PC-9 (cell line): ENCODE measurements at regions of chr19 and their contacts with region 1.

Region 1: GRCh38 chr19:55005684-55006488 is 32.2 kb downstream of the GP6 start:
- DNase-seq: peak; percentile 73 to 87
- H3K4me3 ChIP-seq: peak overlapping the region; percentile 71
- H3K27ac ChIP-seq: peak overlapping the region; percentile 58
- H3K4me1 ChIP-seq: no peaks in the 10 kb centered on the region; the same call in 1 of the 2 replicates
- H3K27me3 ChIP-seq: peaks cover 25% of the 10 kb centered on the region
- CTCF ChIP-seq: no peak

Region 2: GRCh38 chr19:54257116-54257480 is 748.8 kb before region 1 on chr19 and contains the start of gene LILRB5:
- CTCF ChIA-PET with region 1: interaction called, 25 read pairs
- POLR2A ChIA-PET with region 1: no interaction called
- intact Hi-C with region 1: no loop called
- DNase-seq: no peak
- H3K4me3 ChIP-seq: no peak within 1 kb of the TSS
- H3K27ac ChIP-seq: no peak within 1 kb of the TSS
- H3K4me1 ChIP-seq: no peaks in the 10 kb centered on the region
- H3K27me3 ChIP-seq: peaks cover 97% of the 10 kb centered on the region
- CTCF ChIP-seq: no peak
- total RNA-seq, gene LILRB5: not detected in 2 replicates

Region 3: DNA sequence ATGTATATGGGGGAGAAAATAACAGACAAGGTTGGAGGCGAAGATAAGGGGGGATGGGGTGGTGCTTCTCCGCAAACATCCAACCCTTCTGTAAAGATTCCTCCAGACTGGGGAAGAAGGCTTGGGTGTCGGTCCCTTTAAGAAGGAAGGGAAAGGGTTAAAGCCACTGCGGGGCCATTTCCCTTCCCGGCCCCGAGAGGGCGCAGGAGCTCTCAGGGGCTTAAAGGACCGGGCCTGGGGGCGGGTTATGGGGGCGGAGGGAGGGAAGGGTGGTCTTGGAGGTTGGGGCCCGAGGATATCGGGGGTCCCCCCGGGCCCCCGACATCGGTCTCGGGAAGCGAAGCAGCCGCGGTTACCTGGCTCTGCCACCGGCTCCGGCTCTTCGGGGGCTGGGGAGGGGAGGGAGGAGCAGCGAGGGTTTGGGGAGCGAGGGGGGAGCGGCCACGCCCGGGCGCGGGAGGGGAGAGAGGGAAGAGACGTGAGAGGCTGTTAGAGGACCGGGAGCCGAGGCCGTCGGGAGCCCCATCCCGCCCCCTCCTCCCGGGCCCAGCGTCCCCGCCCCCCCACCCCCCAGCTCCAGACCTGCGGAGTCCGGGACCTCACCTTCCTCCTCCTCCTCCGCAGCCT is 140.3 kb after region 1 on chr19:
- CTCF ChIA-PET with region 1: no interaction called
- POLR2A ChIA-PET with region 1: no interaction called
- intact Hi-C with region 1: no loop called
- DNase-seq: peak; percentile 59 to 83
- H3K4me3 ChIP-seq: peak overlapping the region; percentile 67
- H3K27ac ChIP-seq: no peak overlapping the region
- H3K4me1 ChIP-seq: peaks cover 20% of the 10 kb centered on the region; the same call in 1 of the 2 replicates
- H3K27me3 ChIP-seq: peaks cover 4% of the 10 kb centered on the region; the same call in 1 of the 2 replicates
- CTCF ChIP-seq: peak; percentile 98

Region 4: GRCh38 chr19:55156202-55157063 is 150.5 kb after region 1 on chr19:
- CTCF ChIA-PET with region 1: no interaction called
- POLR2A ChIA-PET with region 1: no interaction called
- intact Hi-C with region 1: no loop called
- DNase-seq: peak in 1 of 2 experiments; percentile 88
- H3K4me3 ChIP-seq: no peak overlapping the region
- H3K27ac ChIP-seq: no peak overlapping the region
- H3K4me1 ChIP-seq: peaks cover 19% of the 10 kb centered on the region
- H3K27me3 ChIP-seq: no peaks in the 10 kb centered on the region
- CTCF ChIP-seq: no peak